GM12878 (cell line): ENCODE measurements at regions of chr19 and their contacts with region 1.

Region 1: DNA sequence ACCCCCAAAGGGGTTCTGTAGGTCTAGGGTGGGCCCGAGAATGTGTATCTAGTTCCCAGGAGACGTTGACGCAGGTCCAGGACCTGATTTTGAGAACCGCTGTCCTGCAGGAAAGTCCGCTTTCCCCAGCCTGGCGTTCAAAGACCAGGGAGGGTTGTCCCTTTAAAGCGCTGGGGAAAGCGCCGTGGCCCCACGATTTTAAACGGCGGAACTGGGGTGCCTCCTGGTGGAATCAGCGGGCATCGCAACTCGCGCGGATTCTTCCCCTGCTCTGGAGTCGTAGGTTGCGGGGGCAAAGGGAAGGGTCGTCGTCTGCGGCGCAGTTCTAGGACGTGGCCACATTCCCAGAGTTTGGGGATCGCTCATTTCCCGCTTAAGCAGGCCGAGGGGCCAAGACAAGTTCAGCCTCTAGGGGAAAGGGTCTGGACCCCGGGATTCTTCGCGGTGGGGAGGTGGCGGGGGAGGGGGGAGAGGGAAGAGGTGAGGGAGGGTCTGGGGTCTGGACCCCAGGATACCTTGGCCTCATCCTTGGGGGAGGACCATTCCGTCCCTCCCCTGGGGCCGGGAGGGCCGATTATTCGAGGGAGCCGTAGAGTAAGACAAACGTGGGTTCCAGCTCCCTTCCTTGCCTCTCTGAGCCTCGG is 7.7 kb downstream of the PNMA8B start:
- DNase-seq: no peak
- ATAC-seq: peak; percentile 94
- H3K4me3 ChIP-seq: no peak overlapping the region
- H3K27ac ChIP-seq: no peak overlapping the region
- H3K4me1 ChIP-seq: no peaks in the 10 kb centered on the region
- H3K27me3 ChIP-seq: peaks cover 10 to 23% of the 10 kb centered on the region in 2 experiments; a peak in 3 of 4 replicates
- CTCF ChIP-seq: peak; percentile 89 to 94 (median 91)
- EP300 ChIP-seq: no peak
- POLR2A ChIP-seq: no peak
- RAD21 ChIP-seq: peak; percentile 97

Region 2: GRCh38 chr19:46283771-46284170 is 204.2 kb before region 1 on chr19:
- CTCF ChIA-PET with region 1: interaction called, 14 read pairs
- POLR2A ChIA-PET with region 1: no interaction called
- RAD21 ChIA-PET with region 1: interaction called, 15 read pairs
- SMC1A ChIA-PET with region 1: interaction called, 5 read pairs
- in situ Hi-C with region 1: loop called (anchors 5 kb)
- intact Hi-C with region 1: loop called (anchors 2 kb)
- DNase-seq: no peak
- ATAC-seq: no peak
- H3K4me3 ChIP-seq: no peak overlapping the region
- H3K27ac ChIP-seq: no peak overlapping the region
- H3K4me1 ChIP-seq: no peaks in the 10 kb centered on the region
- H3K27me3 ChIP-seq: no peaks in the 10 kb centered on the region
- CTCF ChIP-seq: no peak
- EP300 ChIP-seq: no peak
- POLR2A ChIP-seq: no peak
- RAD21 ChIP-seq: no peak